ENCODE measurements at regions of chr11 and their contacts with region 1.

Region 1: GRCh38 chr11:119373921-119374631 is 7.4 kb downstream of the USP2 start:
- DNase-seq: peak; percentile 54
- H3K4me3 ChIP-seq: no peak overlapping the region
- H3K27ac ChIP-seq: no peak overlapping the region
- H3K4me1 ChIP-seq: peaks cover 42% of the 10 kb centered on the region
- H3K27me3 ChIP-seq: no peaks in the 10 kb centered on the region
- CTCF ChIP-seq: peak; percentile 94 to 96

Region 2: DNA sequence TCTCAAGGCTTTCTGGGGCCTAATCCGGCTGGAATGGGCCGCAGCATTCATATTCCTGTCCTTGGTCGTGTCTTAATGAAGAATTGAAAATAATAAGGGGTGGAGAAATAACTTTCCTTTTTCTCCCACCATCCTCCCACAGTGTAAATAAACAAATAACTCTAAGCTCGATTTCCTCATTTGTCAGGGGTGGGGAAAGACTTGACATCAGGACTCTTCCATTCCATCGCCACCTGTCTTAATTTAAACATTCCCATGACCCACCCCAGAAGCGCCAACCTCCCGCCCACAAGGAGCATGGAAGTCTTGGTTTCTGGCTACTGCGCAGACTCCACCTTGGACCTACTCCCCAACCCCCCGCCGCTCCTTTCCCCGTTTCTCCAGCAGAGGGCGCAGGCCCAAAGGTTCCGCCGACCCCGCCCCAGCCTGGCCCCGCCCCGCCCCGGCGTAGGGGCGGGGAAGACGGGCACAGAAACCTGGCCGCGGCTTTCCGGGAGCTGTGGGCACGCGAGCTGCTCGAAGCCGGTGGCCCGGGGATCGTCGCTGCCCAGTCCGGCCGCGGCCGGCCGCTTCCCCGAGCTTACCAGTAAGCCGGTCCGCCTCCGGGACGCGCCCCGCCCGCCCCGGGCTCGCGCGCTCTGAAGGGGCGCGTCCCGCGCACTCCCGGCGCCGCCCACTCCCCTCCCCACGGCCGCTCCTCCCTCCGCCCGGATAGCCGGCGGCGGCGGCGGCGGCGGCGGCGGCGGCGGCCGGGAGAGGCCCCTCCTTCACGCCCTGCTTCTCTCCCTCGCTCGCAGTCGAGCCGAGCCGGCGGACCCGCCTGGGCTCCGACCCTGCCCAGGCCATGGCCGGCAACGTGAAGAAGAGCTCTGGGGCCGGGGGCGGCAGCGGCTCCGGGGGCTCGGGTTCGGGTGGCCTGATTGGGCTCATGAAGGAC is 168.2 kb before region 1 on chr11 and contains the start of gene CBL:
- CTCF ChIA-PET with region 1: no interaction called
- dilution Hi-C with region 1: no loop called
- in situ Hi-C with region 1: no loop called
- intact Hi-C with region 1: loop called (anchors 2 kb)
- DNase-seq: peak; percentile 85
- H3K4me3 ChIP-seq: peak within 1 kb of the TSS; percentile 76 to 97 (median 96)
- H3K27ac ChIP-seq: peak within 1 kb of the TSS; percentile 60
- H3K4me1 ChIP-seq: peaks cover 11% of the 10 kb centered on the region
- H3K27me3 ChIP-seq: no peaks in the 10 kb centered on the region
- CTCF ChIP-seq: peak; percentile 57 to 91
- total RNA-seq, gene CBL: 19.5 to 33.7 TPM

Region 3: DNA sequence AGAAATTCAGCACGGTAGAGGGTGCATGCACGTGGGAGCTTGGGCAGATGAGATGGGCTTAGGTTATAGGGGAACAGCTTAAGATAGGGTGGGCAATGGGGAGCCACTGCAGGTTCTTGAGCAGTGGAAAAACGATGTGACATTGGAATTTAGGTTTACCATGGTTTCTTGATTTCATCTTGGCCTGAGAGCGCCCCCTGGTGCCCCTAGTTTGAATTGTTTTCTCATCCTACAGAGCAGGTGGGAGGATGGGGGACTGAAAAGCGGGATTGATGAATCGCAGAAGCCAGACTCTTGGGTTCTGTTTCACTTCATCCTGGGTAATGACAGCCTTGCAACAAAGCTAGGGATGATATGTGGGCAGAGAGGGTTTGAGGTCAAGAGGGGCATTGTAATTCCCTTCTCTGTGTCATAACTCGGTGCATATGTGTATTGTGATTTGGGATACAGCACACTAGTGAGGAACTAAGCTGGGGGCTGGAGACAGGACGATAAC is 50.5 kb before region 1 on chr11:
- CTCF ChIA-PET with region 1: interaction called, 5 read pairs
- dilution Hi-C with region 1: no loop called
- in situ Hi-C with region 1: no loop called
- intact Hi-C with region 1: loop called (anchors 1 kb)
- DNase-seq: peak; percentile 52
- H3K4me3 ChIP-seq: no peak overlapping the region
- H3K27ac ChIP-seq: no peak overlapping the region
- H3K4me1 ChIP-seq: peaks cover 29% of the 10 kb centered on the region
- H3K27me3 ChIP-seq: no peaks in the 10 kb centered on the region
- CTCF ChIP-seq: peak; percentile 78 to 85

Region 4: DNA sequence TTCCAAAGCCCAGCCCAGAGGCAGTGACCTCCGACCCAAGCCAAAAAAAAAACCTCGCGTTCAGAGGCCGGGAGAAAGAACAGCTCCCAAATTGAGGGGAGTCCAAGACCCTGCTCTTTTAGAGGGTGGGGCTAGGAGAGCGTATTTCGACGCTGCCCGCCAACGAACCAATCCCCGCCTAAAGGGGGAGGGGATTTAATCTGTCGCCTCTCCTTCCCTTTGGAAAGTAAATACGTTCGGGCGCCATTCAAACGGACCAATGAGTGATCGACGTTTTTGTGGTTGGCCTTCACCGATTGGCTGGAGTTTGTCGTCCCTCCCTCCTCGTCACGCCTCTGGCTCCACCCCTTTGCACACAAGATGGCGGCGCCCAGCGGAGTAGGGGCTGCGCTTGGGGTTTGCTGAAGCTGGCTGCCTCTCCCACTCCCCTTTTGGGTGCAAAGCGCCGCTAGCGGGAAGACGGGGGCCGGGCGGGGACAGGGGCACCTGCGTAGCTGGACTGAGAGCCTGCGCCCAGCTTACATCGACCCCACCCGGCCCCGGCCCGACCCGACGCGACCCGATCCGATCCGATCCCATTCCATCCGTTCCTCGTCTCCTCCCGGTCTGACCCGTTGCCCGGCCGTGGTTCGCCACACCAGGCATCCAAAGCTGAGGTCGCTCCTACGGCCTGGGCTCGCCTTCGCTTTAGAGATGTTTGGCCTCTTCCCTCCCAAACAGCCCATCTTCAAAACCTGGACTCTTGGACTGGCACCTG is 39.7 kb before region 1 on chr11 and contains the start of gene RNF26:
- CTCF ChIA-PET with region 1: interaction called, 40 read pairs
- dilution Hi-C with region 1: loop called (anchors 5 kb)
- in situ Hi-C with region 1: no loop called
- intact Hi-C with region 1: loop called (anchors 1 kb)
- DNase-seq: peak; percentile 95
- H3K4me3 ChIP-seq: peak within 1 kb of the TSS; percentile 63 to 97 (median 93)
- H3K27ac ChIP-seq: peak within 1 kb of the TSS; percentile 88
- H3K4me1 ChIP-seq: peaks cover 22% of the 10 kb centered on the region
- H3K27me3 ChIP-seq: no peaks in the 10 kb centered on the region
- CTCF ChIP-seq: no peak
- total RNA-seq, gene RNF26: 3.7 to 34.4 TPM

Region 5: DNA sequence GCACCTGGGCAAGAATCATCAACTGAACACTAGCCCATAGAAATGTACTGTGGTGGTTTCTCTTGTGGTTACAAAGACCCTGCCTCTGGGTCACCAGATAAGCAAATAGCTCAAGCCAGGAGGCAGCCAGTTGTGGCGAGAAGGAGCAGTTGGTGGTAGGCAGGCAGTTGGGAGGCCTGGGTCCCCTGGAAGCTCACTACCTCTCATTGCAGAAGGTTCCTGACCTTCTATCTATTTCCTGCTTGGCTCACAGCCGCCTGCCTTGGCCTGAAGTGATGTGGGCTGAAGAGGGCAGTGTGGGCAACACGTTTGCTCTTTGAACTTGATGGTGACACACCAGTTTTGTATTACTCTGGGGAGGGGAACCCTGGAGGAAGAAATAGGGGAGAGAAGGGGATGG is 320.3 kb after region 1 on chr11:
- CTCF ChIA-PET with region 1: no interaction called
- dilution Hi-C with region 1: no loop called
- in situ Hi-C with region 1: no loop called
- intact Hi-C with region 1: loop called (anchors 10 kb)
- DNase-seq: peak; percentile 56
- H3K4me3 ChIP-seq: no peak overlapping the region
- H3K27ac ChIP-seq: peak overlapping the region; percentile 97
- H3K4me1 ChIP-seq: peaks cover 99% of the 10 kb centered on the region
- H3K27me3 ChIP-seq: no peaks in the 10 kb centered on the region
- CTCF ChIP-seq: peak; percentile 14 to 35

Region 6: GRCh38 chr11:119816660-119817059 is 442.6 kb after region 1 on chr11:
- CTCF ChIA-PET with region 1: no interaction called
- dilution Hi-C with region 1: no loop called
- in situ Hi-C with region 1: no loop called
- intact Hi-C with region 1: no loop called
- DNase-seq: no peak
- H3K4me3 ChIP-seq: no peak overlapping the region
- H3K27ac ChIP-seq: no peak overlapping the region
- H3K4me1 ChIP-seq: no peaks in the 10 kb centered on the region
- H3K27me3 ChIP-seq: no peaks in the 10 kb centered on the region
- CTCF ChIP-seq: no peak